B cell (primary cell): ENCODE measurements at regions of chr11 and their contacts with region 1.

Region 1: DNA sequence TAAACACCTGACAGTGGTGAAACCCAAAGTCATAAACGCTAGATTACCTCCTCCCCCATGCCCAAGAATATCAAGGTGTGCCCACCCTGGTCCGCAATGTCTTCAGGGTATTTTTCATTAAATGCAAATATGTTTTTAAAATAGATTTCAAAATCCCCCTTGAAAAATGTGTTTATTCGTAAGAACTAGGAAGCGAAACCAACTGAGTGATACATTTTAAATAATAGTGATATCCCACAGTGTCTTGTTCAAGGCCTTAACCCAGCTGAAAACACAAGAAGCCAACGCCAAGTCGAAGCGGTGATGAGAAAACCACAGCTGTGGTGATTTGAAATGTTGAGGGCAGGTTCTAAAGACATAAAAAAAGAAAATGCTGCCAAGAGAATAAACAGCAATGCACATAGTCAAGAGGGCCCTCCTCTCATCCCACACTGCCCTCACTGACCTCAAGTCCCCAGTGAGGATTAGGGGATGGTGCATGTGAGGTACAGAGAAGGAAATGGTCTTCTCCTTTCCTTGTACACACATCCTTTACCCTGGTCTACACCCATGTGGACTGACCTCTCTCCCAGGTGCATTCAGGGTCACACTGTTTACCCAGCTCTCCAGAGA is 25.5 kb downstream of the KCNJ1 start:
- DNase-seq: peak; percentile 84
- ATAC-seq: peak; percentile 77
- H3K4me3 ChIP-seq: peak overlapping the region in 1 of 5 experiments; percentile 8
- H3K4me3 Mint-ChIP-seq: peak overlapping the region; percentile 70
- H3K27ac ChIP-seq: peak overlapping the region; percentile 94 to 95
- H3K27ac Mint-ChIP-seq: peak overlapping the region; percentile 95
- H3K4me1 ChIP-seq: peaks cover 96 to 100% of the 10 kb centered on the region in 2 donors
- H3K4me1 Mint-ChIP-seq: peaks cover 97% of the 10 kb centered on the region
- H3K27me3 ChIP-seq: no peaks in the 10 kb centered on the region
- H3K27me3 Mint-ChIP-seq: no peaks in the 10 kb centered on the region
- CTCF ChIP-seq: no peak

Region 2: GRCh38 chr11:128610721-128611617 is 230.6 kb before region 1 on chr11:
- CTCF ChIA-PET with region 1: interaction called, 4 read pairs
- POLR2A ChIA-PET with region 1: interaction called, 4 read pairs
- intact Hi-C with region 1: loop called (anchors 2 kb)
- DNase-seq: peak; percentile 95
- ATAC-seq: peak; percentile 89
- H3K4me3 ChIP-seq: peak overlapping the region in 3 of 5 experiments; percentile 20 to 61 (median 29)
- H3K4me3 Mint-ChIP-seq: peak overlapping the region; percentile 58
- H3K27ac ChIP-seq: peak overlapping the region; percentile 93 to 95
- H3K27ac Mint-ChIP-seq: peak overlapping the region; percentile 93
- H3K4me1 ChIP-seq: peaks cover 85 to 87% of the 10 kb centered on the region in 2 donors
- H3K4me1 Mint-ChIP-seq: peaks cover 89% of the 10 kb centered on the region
- H3K27me3 ChIP-seq: no peaks in the 10 kb centered on the region
- H3K27me3 Mint-ChIP-seq: no peaks in the 10 kb centered on the region
- CTCF ChIP-seq: no peak

Region 3: GRCh38 chr11:128707681-128708080 is 133.9 kb before region 1 on chr11:
- CTCF ChIA-PET with region 1: no interaction called
- POLR2A ChIA-PET with region 1: interaction called, 10 read pairs
- intact Hi-C with region 1: no loop called
- DNase-seq: no peak
- ATAC-seq: no peak
- H3K4me3 ChIP-seq: no peak overlapping the region
- H3K4me3 Mint-ChIP-seq: no peak overlapping the region
- H3K27ac ChIP-seq: peak overlapping the region in 1 of 2 donors; percentile 52
- H3K27ac Mint-ChIP-seq: peak overlapping the region; percentile 51
- H3K4me1 ChIP-seq: peaks cover 77 to 88% of the 10 kb centered on the region in 2 donors
- H3K4me1 Mint-ChIP-seq: peaks cover 92% of the 10 kb centered on the region
- H3K27me3 ChIP-seq: no peaks in the 10 kb centered on the region
- H3K27me3 Mint-ChIP-seq: no peaks in the 10 kb centered on the region
- CTCF ChIP-seq: no peak